Cardiac septum (tissue), 1 donor: ENCODE measurements at regions of chr9 and their contacts with region 1.

Region 1: DNA sequence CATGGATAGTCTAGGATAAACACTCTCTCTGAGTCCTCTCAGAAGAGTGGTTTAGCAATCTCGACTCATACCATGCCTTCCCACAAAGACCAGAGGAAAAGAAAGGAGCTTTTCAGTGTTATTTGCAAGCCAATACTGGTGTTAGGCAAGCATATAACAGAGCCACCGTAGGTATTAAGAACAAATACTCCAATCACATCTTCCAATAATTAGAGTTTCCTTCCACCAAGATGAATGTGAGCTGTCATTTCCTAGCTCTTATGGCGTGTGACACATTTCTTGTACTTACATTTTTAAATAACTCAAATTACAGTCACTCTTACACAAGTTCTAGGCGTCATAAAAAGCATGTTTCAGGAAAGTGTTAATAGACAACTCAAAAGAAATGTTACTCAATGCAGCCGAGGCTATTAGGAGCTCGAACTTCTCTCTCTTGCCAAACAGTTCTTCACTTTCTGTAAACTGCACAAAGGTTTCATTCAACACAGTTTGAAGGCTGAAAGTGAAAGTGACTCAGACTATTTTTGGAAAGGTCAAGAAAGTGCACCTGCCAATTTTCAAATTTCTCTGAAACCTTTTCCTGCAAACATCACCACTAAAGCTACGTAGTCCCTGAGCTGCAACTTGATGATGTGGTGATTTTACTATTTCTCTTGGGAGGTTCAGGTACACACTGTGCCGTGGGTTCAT is 153.8 kb downstream of the AUH start:
- DNase-seq: no peak

Region 2: GRCh38 chr9:91150998-91151717 is 56.7 kb before region 1 on chr9:
- intact Hi-C with region 1: no loop called
- DNase-seq: no peak

Region 3: GRCh38 chr9:91245431-91246313 is 37.8 kb after region 1 on chr9:
- intact Hi-C with region 1: loop called (anchors 5 kb)
- DNase-seq: no peak

Region 4: GRCh38 chr9:91623004-91623403 is 415.1 kb after region 1 on chr9:
- intact Hi-C with region 1: no loop called
- DNase-seq: no peak